Activated B cell treated with CpG ODN at 0.5 μM for 24 hours (primary cell): ENCODE measurements at regions of chr7 and their contacts with region 1.

Region 1: GRCh38 chr7:48109848-48110663 is 21.0 kb downstream of the UPP1 start:
- DNase-seq: peak; percentile 79
- ATAC-seq: peak; percentile 92
- H3K4me3 Mint-ChIP-seq: no peak overlapping the region
- H3K27ac Mint-ChIP-seq: no peak overlapping the region
- H3K4me1 Mint-ChIP-seq: peaks cover 5% of the 10 kb centered on the region
- H3K27me3 Mint-ChIP-seq: peaks cover 6% of the 10 kb centered on the region
- CTCF ChIP-seq: peak; percentile 75

Region 2: DNA sequence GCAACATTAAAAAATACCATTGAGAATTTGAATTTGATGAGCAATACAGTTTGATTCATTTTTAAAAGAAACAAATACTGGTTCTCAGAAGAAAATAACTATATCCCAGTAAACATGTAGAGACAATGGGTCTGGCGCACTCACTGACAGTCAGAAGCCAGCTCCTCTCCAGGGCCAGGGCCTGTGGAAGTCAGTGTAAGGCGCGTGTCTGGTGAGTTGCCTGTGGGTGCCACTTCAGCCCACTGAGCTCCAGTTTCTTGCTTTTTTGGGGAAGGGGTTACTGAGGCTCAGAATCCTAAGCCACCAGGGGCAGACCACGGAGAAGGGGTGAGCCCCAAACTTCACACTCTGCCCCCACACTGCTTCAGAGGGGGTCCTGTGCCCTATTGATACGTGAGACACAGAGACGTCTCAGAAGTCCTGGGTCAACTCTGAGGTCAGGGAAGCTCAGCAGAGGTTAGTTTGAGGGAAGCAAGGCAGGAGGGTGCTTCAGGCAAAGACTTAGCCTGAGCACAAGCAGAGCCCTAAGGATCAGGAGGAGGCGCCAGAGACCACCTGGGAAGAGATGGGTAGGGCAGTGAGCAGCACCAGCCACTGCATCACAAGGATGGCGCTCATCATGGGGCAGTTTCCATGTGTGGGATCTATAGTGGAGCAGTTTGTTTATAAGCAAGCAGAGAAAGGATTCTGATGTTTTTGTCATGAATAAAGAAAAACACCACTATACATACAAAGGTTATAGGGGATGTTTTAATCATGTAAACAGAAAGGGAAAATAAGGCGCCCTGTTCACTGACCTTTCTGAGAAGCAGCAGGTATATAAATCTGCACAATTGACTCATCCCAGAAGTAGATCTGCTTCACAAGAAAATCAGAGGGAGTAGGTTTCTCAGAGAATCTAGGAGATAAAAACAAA is 257.5 kb before region 1 on chr7:
- CTCF ChIA-PET with region 1: interaction called, 3 read pairs
- POLR2A ChIA-PET with region 1: no interaction called
- intact Hi-C with region 1: loop called (anchors 1 kb)
- DNase-seq: no peak
- ATAC-seq: peak; percentile 40
- H3K4me3 Mint-ChIP-seq: no peak overlapping the region
- H3K27ac Mint-ChIP-seq: no peak overlapping the region
- H3K4me1 Mint-ChIP-seq: no peaks in the 10 kb centered on the region
- H3K27me3 Mint-ChIP-seq: no peaks in the 10 kb centered on the region
- CTCF ChIP-seq: no peak

Region 3: DNA sequence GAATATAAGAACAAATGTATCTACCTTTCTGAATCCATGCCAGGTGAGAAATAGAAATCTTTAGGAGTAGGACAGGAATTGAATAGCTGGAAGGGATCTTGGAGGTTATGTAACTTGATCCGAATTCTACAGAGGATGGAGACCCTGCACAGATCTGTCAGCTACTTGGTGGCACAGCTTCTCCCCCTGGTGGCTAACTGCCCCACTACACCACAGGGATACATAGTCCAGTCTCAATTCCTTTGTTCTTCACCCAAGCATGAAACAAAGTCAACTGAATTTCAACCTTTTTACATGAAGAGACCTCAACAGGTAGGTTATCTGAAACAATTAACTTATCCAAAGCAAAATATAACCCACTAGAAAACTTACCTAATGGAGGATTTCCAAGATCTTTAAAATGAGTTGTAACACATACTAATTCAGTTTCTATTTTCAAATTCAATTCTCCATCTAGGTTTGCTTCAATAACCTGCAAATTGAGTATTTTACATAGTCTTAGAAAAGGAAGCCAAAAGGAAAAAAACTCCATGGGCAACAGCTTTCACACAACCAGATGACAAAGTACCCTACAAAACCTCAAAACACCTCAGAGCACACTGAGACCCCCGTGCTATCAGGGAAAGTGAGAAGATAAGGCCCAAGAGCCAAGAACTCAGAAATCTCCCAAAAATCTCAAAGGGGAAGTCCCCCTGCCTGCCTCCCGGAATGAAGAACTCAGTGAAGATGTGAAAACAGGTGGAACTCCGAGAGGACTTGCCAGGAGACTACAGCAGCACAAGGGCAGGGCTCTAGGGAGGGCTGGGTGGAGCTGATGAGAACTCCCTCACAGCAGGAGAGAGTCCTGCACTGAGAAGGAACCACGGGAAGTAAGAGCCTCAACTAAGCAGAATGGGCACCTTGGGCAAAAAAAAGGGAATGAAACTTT is 140.9 kb before region 1 on chr7:
- CTCF ChIA-PET with region 1: no interaction called
- POLR2A ChIA-PET with region 1: no interaction called
- intact Hi-C with region 1: loop called (anchors 1 kb)
- DNase-seq: peak; percentile 48
- ATAC-seq: peak; percentile 77
- H3K4me3 Mint-ChIP-seq: no peak overlapping the region
- H3K27ac Mint-ChIP-seq: no peak overlapping the region
- H3K4me1 Mint-ChIP-seq: peaks cover 23% of the 10 kb centered on the region
- H3K27me3 Mint-ChIP-seq: no peaks in the 10 kb centered on the region
- CTCF ChIP-seq: peak; percentile 86

Region 4: GRCh38 chr7:48035301-48035966 is 74.6 kb before region 1 on chr7 and contains the start of gene C7orf57:
- CTCF ChIA-PET with region 1: interaction called, 6 read pairs
- POLR2A ChIA-PET with region 1: no interaction called
- intact Hi-C with region 1: loop called (anchors 1 kb)
- DNase-seq: peak; percentile 75
- ATAC-seq: peak; percentile 97
- H3K4me3 Mint-ChIP-seq: peak within 1 kb of the TSS; percentile 73
- H3K27ac Mint-ChIP-seq: no peak within 1 kb of the TSS
- H3K4me1 Mint-ChIP-seq: peaks cover 13% of the 10 kb centered on the region
- H3K27me3 Mint-ChIP-seq: peaks cover 25% of the 10 kb centered on the region
- CTCF ChIP-seq: no peak
- total RNA-seq, gene C7orf57: not detected in 2 replicates